ENCODE measurements at regions of chr17 and their contacts with region 1.

Region 1: GRCh38 chr17:55527540-55528118 is 16.4 kb upstream of the SMIM36 start:
- DNase-seq: peak; percentile 15 to 41
- H3K4me3 ChIP-seq: no peak overlapping the region
- H3K27ac ChIP-seq: no peak overlapping the region
- H3K4me1 ChIP-seq: no peaks in the 10 kb centered on the region
- H3K27me3 ChIP-seq: 0 out of 2 replicates have a peak, but pooled peaks cover 5% of the 10 kb centered on the region
- CTCF ChIP-seq: peak; percentile 69

Region 2: DNA sequence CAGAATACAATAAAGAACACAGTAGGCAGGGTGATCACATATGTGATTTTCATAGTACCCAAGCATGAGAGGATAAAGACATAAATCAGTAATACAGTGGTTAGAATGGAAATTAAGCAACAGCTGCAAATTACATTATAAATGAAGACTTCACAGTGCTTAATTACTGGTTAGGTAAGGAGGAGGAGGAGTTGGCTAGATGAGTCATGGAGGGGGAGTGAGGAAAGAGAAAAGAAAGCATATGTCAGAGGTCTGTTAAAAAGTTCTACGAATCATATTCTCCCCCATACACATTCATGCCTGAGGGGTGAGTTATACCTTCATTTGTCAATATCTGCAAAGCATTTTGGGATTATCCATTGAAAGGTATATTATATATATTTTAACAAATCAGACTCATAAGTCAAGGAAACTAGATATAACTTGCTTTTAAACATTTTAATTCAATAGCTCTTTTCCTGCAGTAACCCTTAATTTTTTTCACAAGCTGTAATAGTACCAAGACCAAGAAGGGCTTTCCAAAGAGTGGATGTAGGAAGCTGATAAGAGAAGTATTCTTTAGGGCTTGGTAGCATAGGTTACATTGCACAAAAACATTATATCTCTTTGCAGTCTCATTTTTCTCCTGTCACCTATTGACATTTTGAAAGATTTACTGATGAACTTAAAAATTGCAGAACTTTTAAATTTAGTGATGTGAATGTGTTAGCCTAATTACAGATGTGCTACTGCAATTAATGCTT is 459.8 kb before region 1 on chr17:
- CTCF ChIA-PET with region 1: no interaction called
- POLR2A ChIA-PET with region 1: no interaction called
- intact Hi-C with region 1: no loop called
- DNase-seq: no peak
- H3K4me3 ChIP-seq: no peak overlapping the region
- H3K27ac ChIP-seq: no peak overlapping the region
- H3K4me1 ChIP-seq: peaks cover 8% of the 10 kb centered on the region; the same call in 1 of the 2 replicates
- H3K27me3 ChIP-seq: no peaks in the 10 kb centered on the region
- CTCF ChIP-seq: no peak

Region 3: GRCh38 chr17:55607731-55608341 is 80.2 kb after region 1 on chr17:
- CTCF ChIA-PET with region 1: no interaction called
- POLR2A ChIA-PET with region 1: no interaction called
- intact Hi-C with region 1: loop called (anchors 1 kb)
- DNase-seq: peak in 1 of 2 experiments; percentile 77
- H3K4me3 ChIP-seq: no peak overlapping the region
- H3K27ac ChIP-seq: no peak overlapping the region
- H3K4me1 ChIP-seq: no peaks in the 10 kb centered on the region
- H3K27me3 ChIP-seq: peaks cover 25% of the 10 kb centered on the region; the same call in 1 of the 2 replicates
- CTCF ChIP-seq: no peak

Region 4: DNA sequence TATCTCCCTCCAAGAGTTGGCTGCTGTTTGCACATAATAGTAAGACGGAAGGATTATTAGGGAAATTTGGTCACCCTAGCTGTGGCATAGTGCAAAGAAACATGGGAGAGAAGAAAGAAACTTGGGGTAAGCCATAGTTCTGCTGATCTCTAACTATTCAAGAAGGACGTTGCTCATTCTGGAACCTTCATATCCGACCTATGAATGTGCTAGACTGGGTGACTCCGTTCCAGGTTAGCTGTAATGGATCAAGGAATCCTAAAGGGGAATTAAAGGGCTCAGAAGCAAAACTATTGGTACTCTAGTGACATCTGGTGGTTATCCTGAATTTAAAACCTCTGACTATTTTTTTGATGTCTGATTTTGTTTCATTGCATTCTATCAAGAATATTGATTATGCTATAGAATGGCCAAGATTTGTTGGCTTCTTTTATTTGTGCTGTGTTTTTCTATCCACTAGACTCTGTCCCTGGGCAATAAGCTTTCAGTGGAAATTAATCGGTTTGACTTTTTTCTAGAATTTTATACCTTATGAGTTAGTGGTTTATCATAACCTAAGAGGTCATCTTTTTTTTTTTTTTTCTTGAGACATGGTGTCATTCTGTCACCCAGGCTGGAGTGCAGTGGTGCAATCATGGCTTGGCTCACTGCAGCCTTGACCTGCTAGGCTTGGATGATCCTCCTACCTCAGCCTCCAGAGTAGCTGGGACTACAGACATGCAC is 242.7 kb after region 1 on chr17:
- CTCF ChIA-PET with region 1: no interaction called
- POLR2A ChIA-PET with region 1: no interaction called
- intact Hi-C with region 1: loop called (anchors 1 kb)
- DNase-seq: no peak
- H3K4me3 ChIP-seq: no peak overlapping the region
- H3K27ac ChIP-seq: no peak overlapping the region
- H3K4me1 ChIP-seq: peaks cover 13% of the 10 kb centered on the region
- H3K27me3 ChIP-seq: no peaks in the 10 kb centered on the region
- CTCF ChIP-seq: peak; percentile 84

Region 5: DNA sequence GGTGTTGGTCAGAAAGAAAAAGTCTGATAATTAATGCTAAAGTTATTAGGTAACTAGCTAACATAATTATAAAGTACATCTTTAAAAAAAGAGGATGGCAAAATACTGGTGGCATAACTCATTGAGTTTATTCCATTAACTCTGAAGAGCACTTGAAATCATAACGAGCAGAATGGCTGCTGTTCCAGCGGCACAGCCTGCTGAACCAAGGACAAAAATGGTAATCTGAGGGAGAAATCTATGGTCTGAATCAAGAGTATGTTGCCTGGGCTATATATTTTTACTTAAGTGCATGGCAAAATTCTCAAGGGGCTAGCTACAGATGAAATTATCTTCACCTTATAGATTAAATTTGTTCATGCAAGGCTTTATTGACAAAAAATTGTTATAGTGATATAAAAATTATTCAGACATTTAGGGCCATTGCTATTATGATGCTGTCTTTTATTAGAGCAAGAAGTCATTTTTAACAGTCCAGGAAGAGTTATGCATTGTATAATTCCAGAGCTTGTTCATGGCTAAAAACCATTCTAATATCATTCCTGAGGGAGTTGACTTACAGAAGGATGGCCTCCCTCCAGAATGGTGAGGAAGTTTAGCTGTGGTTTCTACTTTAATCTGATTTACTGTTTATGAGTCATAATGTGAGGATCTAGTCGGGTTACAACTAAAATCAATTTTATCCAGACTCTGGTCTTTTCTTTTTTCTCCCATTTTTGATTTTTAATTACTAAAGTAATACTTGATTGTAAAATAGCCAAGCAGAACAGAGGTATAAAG is 584.3 kb after region 1 on chr17:
- CTCF ChIA-PET with region 1: no interaction called
- POLR2A ChIA-PET with region 1: no interaction called
- intact Hi-C with region 1: no loop called
- DNase-seq: no peak
- H3K4me3 ChIP-seq: no peak overlapping the region
- H3K27ac ChIP-seq: no peak overlapping the region
- H3K4me1 ChIP-seq: no peaks in the 10 kb centered on the region
- H3K27me3 ChIP-seq: no peaks in the 10 kb centered on the region
- CTCF ChIP-seq: no peak

Region 6: GRCh38 chr17:56319517-56319916 is 791.9 kb after region 1 on chr17:
- CTCF ChIA-PET with region 1: no interaction called
- POLR2A ChIA-PET with region 1: no interaction called
- intact Hi-C with region 1: loop called (anchors 5 kb)
- DNase-seq: peak in 1 of 2 experiments; percentile 46
- H3K4me3 ChIP-seq: no peak overlapping the region
- H3K27ac ChIP-seq: no peak overlapping the region
- H3K4me1 ChIP-seq: no peaks in the 10 kb centered on the region
- H3K27me3 ChIP-seq: no peaks in the 10 kb centered on the region; the same call in 1 of the 2 replicates
- CTCF ChIP-seq: peak; percentile 79